ENCODE measurements at regions of chr16 and their contacts with region 1.

Region 1: GRCh38 chr16:89449726-89450335 is 40.5 kb downstream of the ANKRD11 start:
- DNase-seq: no peak
- ATAC-seq: no peak

Region 2: DNA sequence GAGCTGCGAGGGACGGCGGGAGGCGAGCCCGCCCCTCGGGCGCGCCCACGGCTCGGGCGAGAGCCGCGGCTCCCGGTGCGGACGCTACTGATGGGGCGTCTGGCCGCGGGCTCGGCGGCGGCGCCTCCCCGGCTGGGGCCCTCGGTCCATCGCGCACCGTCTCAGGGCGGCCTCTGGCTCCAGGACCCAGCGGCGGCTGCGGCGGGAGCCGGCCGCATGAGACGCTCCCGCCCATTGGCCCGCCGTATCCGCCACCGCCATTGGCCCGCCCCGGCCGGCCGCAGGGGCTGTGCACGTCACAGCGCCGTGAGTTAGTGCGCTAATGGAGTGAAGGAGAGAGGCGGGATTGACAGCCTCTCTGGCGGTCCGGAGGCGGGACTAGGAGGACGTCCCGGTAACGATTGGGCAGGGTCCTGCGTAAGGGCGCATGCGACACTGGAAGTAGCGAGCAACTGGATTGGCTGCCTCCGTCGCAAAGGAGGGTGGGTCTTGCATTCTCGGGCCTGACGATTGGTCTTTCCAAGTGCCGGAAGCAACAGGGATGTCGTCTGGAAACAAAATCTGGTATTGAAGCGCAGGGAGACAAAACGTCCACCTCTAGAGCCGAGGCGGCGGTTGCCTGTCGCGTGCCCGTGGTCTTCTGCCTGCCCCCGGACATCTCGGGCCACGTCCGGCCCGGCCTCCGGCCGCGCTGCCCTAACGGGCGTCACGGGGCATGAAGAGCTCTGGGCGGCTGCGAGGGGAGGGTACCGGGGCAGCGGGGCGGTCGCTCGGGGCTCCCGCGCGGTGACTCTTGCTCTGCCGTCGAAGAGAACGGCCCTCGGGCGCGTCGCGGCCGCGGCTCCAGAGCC is 40.8 kb after region 1 on chr16 and contains the start of gene ANKRD11:
- intact Hi-C with region 1: loop called (anchors 5 kb)
- DNase-seq: peak; percentile 99
- ATAC-seq: peak; percentile 98
- total RNA-seq, gene ANKRD11: 64.9 TPM

Region 3: GRCh38 chr16:89581045-89581690 is 131.3 kb after region 1 on chr16:
- intact Hi-C with region 1: no loop called
- DNase-seq: peak; percentile 42
- ATAC-seq: no peak

Region 4: GRCh38 chr16:89828199-89828778 is 378.5 kb after region 1 on chr16 and contains the start of gene SPIRE2:
- intact Hi-C with region 1: loop called (anchors 5 kb)
- DNase-seq: peak; percentile 82
- ATAC-seq: peak; percentile 85
- total RNA-seq, gene SPIRE2: 0.54 TPM

Measured in Right ventricle myocardium inferior (tissue), 1 donor.